ENCODE measurements at regions of chr6 and their contacts with region 1.

Region 1: DNA sequence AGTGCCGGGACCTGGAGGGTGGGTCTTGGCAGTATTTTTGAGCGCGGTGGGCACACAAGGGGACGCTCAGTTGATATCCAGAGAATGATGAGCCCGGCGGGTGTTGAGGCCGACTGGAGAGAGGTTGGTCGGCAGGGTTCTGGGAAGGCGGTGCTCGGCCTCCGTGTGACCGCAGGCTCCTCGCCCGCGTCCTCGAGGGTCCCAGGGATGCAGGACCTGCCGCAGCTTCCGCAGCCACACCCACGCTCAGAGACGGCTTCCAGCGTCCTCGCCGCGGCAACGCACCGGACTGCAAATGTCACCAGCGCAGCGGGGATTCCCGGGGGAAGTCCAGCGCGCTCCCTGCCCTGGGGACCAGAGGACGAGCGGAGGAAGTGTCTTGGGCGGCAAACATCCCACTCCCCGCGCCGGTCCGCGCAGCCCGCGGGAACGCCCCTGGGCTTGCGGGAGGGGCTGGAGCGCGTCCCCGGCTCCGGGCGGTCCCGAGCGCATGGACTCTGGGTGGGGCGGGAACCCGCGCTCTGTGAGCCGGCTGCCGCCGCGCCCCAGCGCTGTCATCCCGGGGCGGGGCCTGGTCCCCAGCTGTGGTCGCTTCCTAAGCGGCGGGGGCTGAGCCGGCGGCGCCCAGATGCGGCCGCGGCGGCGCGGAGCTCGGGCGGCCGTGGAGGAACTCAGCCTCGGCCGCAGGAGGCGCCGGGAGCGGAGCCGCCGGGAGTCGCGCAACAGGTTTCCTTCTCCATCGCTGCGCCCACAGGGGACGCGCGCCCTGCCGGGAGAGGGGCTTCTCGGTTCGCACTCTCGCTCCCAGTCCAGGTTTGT is at the start of gene STX11:
- DNase-seq: peak; percentile 91
- H3K4me3 Mint-ChIP-seq: peak within 1 kb of the TSS; percentile 81
- H3K27ac Mint-ChIP-seq: peak within 1 kb of the TSS; percentile 93
- H3K4me1 Mint-ChIP-seq: peaks cover 40% of the 10 kb centered on the region
- H3K27me3 Mint-ChIP-seq: no peaks in the 10 kb centered on the region
- total RNA-seq, gene STX11: 17.2 to 17.5 TPM

Region 2: GRCh38 chr6:143450453-143451371 is 699.4 kb before region 1 on chr6 and contains the starts of genes ADAT2 and PEX3:
- CTCF ChIA-PET with region 1: no interaction called
- intact Hi-C with region 1: loop called (anchors 10 kb)
- DNase-seq: peak; percentile 96
- H3K4me3 Mint-ChIP-seq: peak within 1 kb of the TSS; percentile 100
- H3K27ac Mint-ChIP-seq: peak within 1 kb of the TSS; percentile 97
- H3K4me1 Mint-ChIP-seq: peaks cover 50% of the 10 kb centered on the region
- H3K27me3 Mint-ChIP-seq: no peaks in the 10 kb centered on the region
- total RNA-seq, gene ADAT2: 36.8 to 39.5 TPM
- total RNA-seq, gene PEX3: 10.8 to 11.9 TPM

Region 3: GRCh38 chr6:143842902-143843676 is 307.0 kb before region 1 on chr6 and contains the start of gene LTV1:
- CTCF ChIA-PET with region 1: no interaction called
- intact Hi-C with region 1: loop called (anchors 1 kb)
- DNase-seq: peak; percentile 96
- H3K4me3 Mint-ChIP-seq: peak within 1 kb of the TSS; percentile 93
- H3K27ac Mint-ChIP-seq: peak within 1 kb of the TSS; percentile 94
- H3K4me1 Mint-ChIP-seq: peaks cover 28% of the 10 kb centered on the region
- H3K27me3 Mint-ChIP-seq: no peaks in the 10 kb centered on the region
- total RNA-seq, gene LTV1: 22.8 to 23.3 TPM

Region 4: GRCh38 chr6:144063744-144064401 is 86.2 kb before region 1 on chr6:
- CTCF ChIA-PET with region 1: no interaction called
- intact Hi-C with region 1: loop called (anchors 1 kb)
- DNase-seq: peak; percentile 86
- H3K4me3 Mint-ChIP-seq: peak overlapping the region; percentile 75
- H3K27ac Mint-ChIP-seq: peak overlapping the region; percentile 43
- H3K4me1 Mint-ChIP-seq: peaks cover 40% of the 10 kb centered on the region
- H3K27me3 Mint-ChIP-seq: no peaks in the 10 kb centered on the region

Region 5: GRCh38 chr6:144083172-144083571 is 66.9 kb before region 1 on chr6:
- CTCF ChIA-PET with region 1: no interaction called
- intact Hi-C with region 1: no loop called
- DNase-seq: no peak
- H3K4me3 Mint-ChIP-seq: no peak overlapping the region
- H3K27ac Mint-ChIP-seq: no peak overlapping the region
- H3K4me1 Mint-ChIP-seq: no peaks in the 10 kb centered on the region
- H3K27me3 Mint-ChIP-seq: no peaks in the 10 kb centered on the region

Region 6: GRCh38 chr6:144131248-144131709 is 18.8 kb before region 1 on chr6:
- CTCF ChIA-PET with region 1: interaction called, 5 read pairs
- intact Hi-C with region 1: loop called (anchors 1 kb)
- DNase-seq: no peak
- H3K4me3 Mint-ChIP-seq: peak overlapping the region; percentile 57
- H3K27ac Mint-ChIP-seq: peak overlapping the region; percentile 92
- H3K4me1 Mint-ChIP-seq: peaks cover 52% of the 10 kb centered on the region
- H3K27me3 Mint-ChIP-seq: peaks cover 3% of the 10 kb centered on the region

Region 7: DNA sequence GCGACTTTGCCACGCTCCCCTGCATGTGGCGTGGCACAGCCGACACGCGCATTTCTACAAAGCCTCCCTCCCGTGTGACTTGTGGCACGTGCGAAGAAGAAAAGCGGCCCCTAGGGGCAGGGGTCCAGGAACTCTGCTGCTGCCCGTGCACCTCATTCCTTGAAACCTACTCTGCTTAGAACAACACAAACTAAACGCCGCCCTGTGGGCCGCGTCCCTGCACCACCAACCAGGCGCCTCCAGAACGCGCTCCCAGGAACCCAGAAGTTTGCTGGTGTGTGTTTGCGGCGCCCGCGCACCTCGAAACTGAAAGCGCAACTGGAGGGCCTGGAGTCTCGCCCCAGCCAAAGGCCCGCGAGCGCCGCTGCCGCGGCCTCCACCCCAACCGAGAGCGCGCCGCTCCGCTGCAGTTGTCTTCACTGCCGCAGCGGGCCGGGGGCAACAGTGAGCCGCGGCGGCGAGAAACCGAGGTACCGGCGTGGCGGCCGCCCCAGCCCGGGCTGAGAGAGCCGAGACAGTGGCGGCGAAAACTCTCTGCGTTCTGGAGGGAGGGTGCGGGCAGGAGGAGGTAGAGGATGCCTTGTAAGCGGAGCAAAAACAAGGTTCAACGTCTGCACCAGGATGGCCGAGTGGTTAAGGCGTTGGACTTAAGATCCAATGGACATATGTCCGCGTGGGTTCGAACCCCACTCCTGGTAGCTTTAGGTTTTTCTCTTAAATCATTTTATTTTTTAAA is 66.0 kb after region 1 on chr6:
- CTCF ChIA-PET with region 1: interaction called, 5 read pairs
- intact Hi-C with region 1: loop called (anchors 1 kb)
- DNase-seq: peak; percentile 93
- H3K4me3 Mint-ChIP-seq: peak overlapping the region; percentile 79
- H3K27ac Mint-ChIP-seq: peak overlapping the region; percentile 96
- H3K4me1 Mint-ChIP-seq: peaks cover 31% of the 10 kb centered on the region
- H3K27me3 Mint-ChIP-seq: peaks cover 2% of the 10 kb centered on the region

Region 8: DNA sequence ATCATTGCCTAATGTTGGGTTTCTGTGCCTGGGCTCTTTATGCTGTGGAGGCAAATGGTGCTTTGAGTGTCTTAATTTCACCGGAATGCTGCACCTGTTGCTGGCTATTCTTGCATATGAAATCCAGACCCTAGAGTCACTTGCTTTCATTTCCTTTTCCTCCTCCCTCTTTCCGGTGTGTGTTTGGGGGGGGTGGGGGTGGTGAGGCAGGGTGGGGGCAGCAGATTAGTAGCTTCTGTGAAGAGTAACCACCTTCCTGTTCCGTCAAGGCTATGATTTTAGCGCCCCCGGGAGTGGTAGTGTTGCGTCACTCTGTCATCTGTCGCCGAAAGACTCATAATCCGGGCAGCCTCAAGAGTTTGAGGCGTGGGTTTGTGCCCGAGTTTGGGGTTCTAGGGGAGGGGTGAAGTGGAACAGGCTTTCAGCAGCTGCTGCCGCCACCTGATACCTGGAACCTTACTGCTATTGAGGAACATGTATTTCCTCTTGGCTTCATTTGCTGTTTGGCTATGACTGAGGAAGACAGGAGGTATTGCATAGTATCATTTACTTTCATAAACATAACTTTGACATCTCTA is 184.1 kb after region 1 on chr6:
- CTCF ChIA-PET with region 1: no interaction called
- intact Hi-C with region 1: loop called (anchors 2 kb)
- DNase-seq: peak; percentile 83
- H3K4me3 Mint-ChIP-seq: peak overlapping the region; percentile 59
- H3K27ac Mint-ChIP-seq: peak overlapping the region; percentile 50
- H3K4me1 Mint-ChIP-seq: peaks cover 45% of the 10 kb centered on the region
- H3K27me3 Mint-ChIP-seq: no peaks in the 10 kb centered on the region

Measured in activated naive CD4-positive, alpha-beta T cell treated with anti-CD3 and anti-CD28 coated beads for 36 hours (primary cell).